ENCODE measurements at regions of chr9 and their contacts with region 1.

Region 1: GRCh38 chr9:87497604-87498045 is at the start of gene DAPK1:
- DNase-seq: peak; percentile 72 to 91 (median 82)
- ATAC-seq: peak; percentile 80 to 88 (median 82)
- H3K4me3 ChIP-seq: peak within 1 kb of the TSS; percentile 65 to 85 (median 82)
- H3K27ac ChIP-seq: peak within 1 kb of the TSS; percentile 91 to 97 (median 94)
- H3K4me1 ChIP-seq: peaks cover 9 to 39% (median 38%) of the 10 kb centered on the region in 3 donors
- H3K27me3 ChIP-seq: no peaks in the 10 kb centered on the region
- CTCF ChIP-seq: no peak
- total RNA-seq, gene DAPK1: 43.1 to 98.7 (median 48.9) TPM

Region 2: DNA sequence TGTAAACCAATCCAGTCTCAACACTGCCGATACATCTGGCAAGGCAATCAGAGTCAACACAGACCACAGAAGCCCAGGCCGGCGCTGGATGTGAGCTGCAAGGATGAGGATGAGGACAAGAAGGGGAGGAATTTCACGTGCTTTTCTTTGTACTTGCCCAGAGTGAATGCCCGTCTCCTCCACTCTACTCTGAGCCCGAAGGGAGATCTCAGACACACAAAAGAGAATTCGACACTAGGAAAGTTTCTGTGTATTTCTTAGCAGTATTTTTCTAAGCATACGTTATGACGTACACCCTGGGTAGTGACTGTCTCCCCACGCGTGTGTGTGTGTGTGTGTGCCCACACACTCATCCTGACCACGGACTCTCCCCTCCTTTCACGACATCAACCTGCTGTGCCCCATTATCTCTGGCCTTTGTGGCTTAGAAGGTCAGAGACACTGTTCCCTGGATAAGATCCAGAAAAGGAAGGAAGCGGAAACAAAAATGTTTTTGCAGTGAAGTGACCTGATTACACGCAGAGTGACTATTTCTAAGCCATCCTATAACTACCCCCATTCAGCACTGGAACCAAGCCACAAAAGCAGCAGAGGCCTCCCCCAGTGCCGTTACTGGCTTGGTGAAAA is 227.3 kb before region 1 on chr9:
- intact Hi-C with region 1: no loop called
- DNase-seq: peak in 2 of 6 donors; percentile 34 to 43
- ATAC-seq: peak; percentile 55 to 86 (median 83)
- H3K4me3 ChIP-seq: no peak overlapping the region
- H3K27ac ChIP-seq: peak overlapping the region in 2 of 4 donors; percentile 49
- H3K4me1 ChIP-seq: peaks cover 0 to 3% (median 0%) of the 10 kb centered on the region in 3 donors
- H3K27me3 ChIP-seq: no peaks in the 10 kb centered on the region
- CTCF ChIP-seq: no peak

Region 3: GRCh38 chr9:87336914-87337333 is 160.7 kb before region 1 on chr9:
- intact Hi-C with region 1: loop called in 2 of 3 experiments (anchors 5 to 10 kb)
- DNase-seq: peak in 5 of 6 donors; percentile 48 to 74 (median 68)
- ATAC-seq: peak; percentile 82 to 91 (median 90)
- H3K4me3 ChIP-seq: peak overlapping the region in 3 of 4 donors; percentile 0 to 38 (median 25)
- H3K27ac ChIP-seq: peak overlapping the region in 2 of 4 donors; percentile 15 to 60
- H3K4me1 ChIP-seq: peaks cover 3 to 9% (median 8%) of the 10 kb centered on the region in 3 donors
- H3K27me3 ChIP-seq: no peaks in the 10 kb centered on the region
- CTCF ChIP-seq: peak; percentile 39 to 50 (median 48)

Region 4: GRCh38 chr9:87342743-87343142 is 154.9 kb before region 1 on chr9:
- intact Hi-C with region 1: loop called in 2 of 3 experiments (anchors 5 to 10 kb)
- DNase-seq: no peak
- ATAC-seq: peak in 1 of 4 donors; percentile 53
- H3K4me3 ChIP-seq: no peak overlapping the region
- H3K27ac ChIP-seq: no peak overlapping the region
- H3K4me1 ChIP-seq: peaks cover 0 to 3% (median 2%) of the 10 kb centered on the region in 3 donors
- H3K27me3 ChIP-seq: no peaks in the 10 kb centered on the region
- CTCF ChIP-seq: no peak

Region 5: DNA sequence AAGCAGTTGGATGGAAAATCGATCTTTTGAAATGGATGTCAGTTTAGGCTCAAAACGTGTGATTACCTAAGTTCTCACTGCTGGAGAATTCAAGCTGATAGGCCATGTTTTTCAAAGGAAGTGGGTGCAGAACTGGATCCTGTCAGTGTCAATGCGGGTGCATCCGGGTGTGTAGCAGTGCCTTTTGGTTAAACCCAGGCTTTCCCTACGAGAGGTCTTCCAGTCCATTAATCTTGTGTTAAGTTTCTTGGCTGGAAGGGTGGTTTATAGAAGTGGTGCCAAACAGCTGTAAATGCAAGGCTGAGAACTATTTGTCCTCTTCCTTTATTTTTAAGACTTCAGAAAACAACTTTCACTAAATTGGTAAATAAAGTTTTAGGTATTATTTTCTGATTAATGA is 71.9 kb after region 1 on chr9:
- intact Hi-C with region 1: loop called in 1 of 3 experiments (anchors 10 kb)
- DNase-seq: no peak
- ATAC-seq: peak; percentile 25 to 42 (median 28)
- H3K4me3 ChIP-seq: no peak overlapping the region
- H3K27ac ChIP-seq: peak overlapping the region in 3 of 4 donors; percentile 30 to 81 (median 68)
- H3K4me1 ChIP-seq: peaks cover 44 to 51% (median 49%) of the 10 kb centered on the region in 3 donors
- H3K27me3 ChIP-seq: no peaks in the 10 kb centered on the region
- CTCF ChIP-seq: no peak

Region 6: GRCh38 chr9:87581513-87581912 is 83.9 kb after region 1 on chr9:
- intact Hi-C with region 1: no loop called
- DNase-seq: peak in 1 of 6 donors; percentile 31
- ATAC-seq: peak; percentile 63 to 79 (median 68)
- H3K4me3 ChIP-seq: no peak overlapping the region
- H3K27ac ChIP-seq: peak overlapping the region; percentile 2 to 68 (median 34)
- H3K4me1 ChIP-seq: peaks cover 34 to 43% (median 34%) of the 10 kb centered on the region in 3 donors
- H3K27me3 ChIP-seq: no peaks in the 10 kb centered on the region
- CTCF ChIP-seq: no peak

Region 7: GRCh38 chr9:87662808-87663528 is 165.3 kb after region 1 on chr9:
- intact Hi-C with region 1: loop called in 1 of 3 experiments (anchors 10 kb)
- DNase-seq: peak in 5 of 6 donors; percentile 68 to 96 (median 81)
- ATAC-seq: peak; percentile 75 to 90 (median 88)
- H3K4me3 ChIP-seq: no peak overlapping the region
- H3K27ac ChIP-seq: no peak overlapping the region
- H3K4me1 ChIP-seq: peaks cover 0 to 4% (median 0%) of the 10 kb centered on the region in 3 donors
- H3K27me3 ChIP-seq: no peaks in the 10 kb centered on the region
- CTCF ChIP-seq: peak; percentile 52 to 73 (median 61)

Measured in pancreas (tissue), 10 donors.